OCI-LY7 (cell line): ENCODE measurements at regions of chr4 and their contacts with region 1.

Region 1: GRCh38 chr4:55948726-55949474 is at the start of gene CEP135:
- DNase-seq: peak; percentile 95
- H3K4me3 ChIP-seq: peak within 1 kb of the TSS; percentile 82
- H3K27ac ChIP-seq: peak within 1 kb of the TSS; percentile 95
- H3K4me1 ChIP-seq: peaks cover 53% of the 10 kb centered on the region
- CTCF ChIP-seq: peak; percentile 87
- total RNA-seq, gene CEP135: 21.6 and 32.4 TPM in 2 replicates

Region 2: GRCh38 chr4:54032558-54033135 is 1916.3 kb before region 1 on chr4:
- CTCF ChIA-PET with region 1: no interaction called
- POLR2A ChIA-PET with region 1: no interaction called
- intact Hi-C with region 1: no loop called
- DNase-seq: peak; percentile 41
- H3K4me3 ChIP-seq: peak overlapping the region; percentile 39
- H3K27ac ChIP-seq: peak overlapping the region; percentile 85
- H3K4me1 ChIP-seq: peaks cover 44% of the 10 kb centered on the region
- CTCF ChIP-seq: no peak

Region 3: DNA sequence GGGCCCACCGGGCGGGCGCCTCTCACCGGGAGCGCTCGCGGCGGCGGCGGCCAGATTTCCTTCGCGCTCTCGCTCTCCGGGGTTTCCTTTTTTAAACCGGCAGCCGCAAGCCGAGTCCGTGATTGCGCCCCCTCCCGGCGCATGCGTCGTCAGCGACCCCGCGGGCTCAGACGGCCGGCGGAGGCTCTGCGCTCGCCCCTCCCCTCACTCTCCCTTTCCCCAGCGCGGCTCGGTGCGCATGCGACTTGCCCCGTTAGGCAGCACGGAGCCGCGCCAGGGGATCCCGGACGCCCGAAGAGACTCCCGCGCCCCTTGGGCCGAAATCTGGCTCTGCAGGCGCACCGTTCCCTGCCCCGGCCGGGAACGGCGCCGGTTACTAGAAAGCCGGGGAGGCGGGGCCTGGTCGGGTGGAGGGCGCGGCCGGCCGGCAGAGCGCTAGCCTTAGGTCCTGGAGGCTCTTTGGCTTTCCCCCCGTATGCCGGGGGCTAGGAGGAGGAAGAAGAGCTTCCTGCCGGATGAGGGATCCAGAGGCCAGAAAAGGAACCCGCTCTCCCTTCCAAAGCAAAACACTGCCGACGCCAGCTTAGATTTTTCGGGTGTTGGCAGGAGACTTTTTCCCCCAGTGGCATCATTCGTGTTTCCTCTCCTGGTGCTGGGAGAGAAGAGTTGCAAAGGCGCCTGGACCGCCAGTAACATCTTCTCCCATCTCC is 402.0 kb before region 1 on chr4 and contains the start of gene CLOCK:
- CTCF ChIA-PET with region 1: no interaction called
- POLR2A ChIA-PET with region 1: no interaction called
- intact Hi-C with region 1: loop called (anchors 5 kb)
- DNase-seq: peak; percentile 86
- H3K4me3 ChIP-seq: peak within 1 kb of the TSS; percentile 79
- H3K27ac ChIP-seq: peak within 1 kb of the TSS; percentile 45
- H3K4me1 ChIP-seq: peaks cover 7% of the 10 kb centered on the region
- CTCF ChIP-seq: peak; percentile 68
- total RNA-seq, gene CLOCK: 1.9 and 2.0 TPM in 2 replicates

Region 4: GRCh38 chr4:55959655-55960054 is 10.8 kb after region 1 on chr4:
- CTCF ChIA-PET with region 1: interaction called, 5 read pairs
- POLR2A ChIA-PET with region 1: interaction called, 12 read pairs
- intact Hi-C with region 1: no loop called
- DNase-seq: no peak
- H3K4me3 ChIP-seq: no peak overlapping the region
- H3K27ac ChIP-seq: no peak overlapping the region
- H3K4me1 ChIP-seq: no peaks in the 10 kb centered on the region
- CTCF ChIP-seq: no peak

Region 5: DNA sequence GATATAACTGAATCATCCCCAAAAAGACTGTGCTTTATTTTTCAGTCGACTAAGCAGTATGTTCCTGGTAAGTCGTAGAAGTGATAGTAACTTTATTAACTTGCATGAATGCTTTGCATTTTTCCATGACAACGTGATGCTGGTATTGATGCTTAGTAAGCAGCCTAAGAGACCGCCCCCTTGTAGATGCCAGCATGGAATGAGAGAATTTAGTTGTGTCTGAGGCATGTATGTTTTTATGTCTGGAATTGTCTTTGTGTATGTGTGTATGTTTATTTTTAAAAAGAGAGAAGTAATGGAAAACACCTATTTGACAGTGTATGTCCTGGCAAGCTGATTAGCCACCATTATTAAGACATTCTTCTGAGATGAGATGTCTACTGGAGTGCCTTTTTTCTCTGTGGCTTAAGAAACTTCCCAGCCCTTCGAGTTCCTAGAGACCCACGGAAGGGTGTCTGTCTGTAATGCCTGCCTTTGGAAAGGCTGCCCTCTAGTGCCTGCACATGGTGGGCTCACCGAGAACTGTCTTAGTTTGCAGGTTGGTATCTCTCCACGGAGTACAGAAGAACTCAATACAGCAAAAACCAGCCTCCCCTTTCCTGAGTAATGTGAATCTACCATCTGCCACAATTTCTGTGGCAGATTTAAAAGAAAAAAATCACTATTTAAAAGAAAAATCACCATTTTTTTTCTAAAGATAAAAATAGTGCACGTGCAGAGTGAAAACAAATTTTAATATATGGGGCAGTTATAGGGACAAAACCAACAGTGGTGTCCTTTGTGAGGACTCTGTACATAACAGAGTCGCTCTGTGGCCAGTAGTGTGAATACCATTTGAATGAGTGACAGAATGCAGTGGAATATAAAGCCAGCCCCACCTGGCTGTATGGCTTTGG is 352.5 kb after region 1 on chr4:
- CTCF ChIA-PET with region 1: no interaction called
- POLR2A ChIA-PET with region 1: interaction called, 4 read pairs
- intact Hi-C with region 1: loop called (anchors 1 kb)
- DNase-seq: peak; percentile 77
- H3K4me3 ChIP-seq: no peak overlapping the region
- H3K27ac ChIP-seq: no peak overlapping the region
- H3K4me1 ChIP-seq: no peaks in the 10 kb centered on the region
- CTCF ChIP-seq: peak; percentile 98

Region 6: GRCh38 chr4:56907489-56908205 is 958.7 kb after region 1 on chr4 and contains the start of gene REST:
- CTCF ChIA-PET with region 1: no interaction called
- POLR2A ChIA-PET with region 1: no interaction called
- intact Hi-C with region 1: loop called (anchors 5 kb)
- DNase-seq: peak; percentile 86
- H3K4me3 ChIP-seq: peak within 1 kb of the TSS; percentile 84
- H3K27ac ChIP-seq: peak within 1 kb of the TSS; percentile 89
- H3K4me1 ChIP-seq: peaks cover 37% of the 10 kb centered on the region
- CTCF ChIP-seq: no peak
- total RNA-seq, gene REST: 26.7 and 27.3 TPM in 2 replicates